Cardiac septum (tissue), 1 donor: ENCODE measurements at regions of chr4 and their contacts with region 1.

Region 1: DNA sequence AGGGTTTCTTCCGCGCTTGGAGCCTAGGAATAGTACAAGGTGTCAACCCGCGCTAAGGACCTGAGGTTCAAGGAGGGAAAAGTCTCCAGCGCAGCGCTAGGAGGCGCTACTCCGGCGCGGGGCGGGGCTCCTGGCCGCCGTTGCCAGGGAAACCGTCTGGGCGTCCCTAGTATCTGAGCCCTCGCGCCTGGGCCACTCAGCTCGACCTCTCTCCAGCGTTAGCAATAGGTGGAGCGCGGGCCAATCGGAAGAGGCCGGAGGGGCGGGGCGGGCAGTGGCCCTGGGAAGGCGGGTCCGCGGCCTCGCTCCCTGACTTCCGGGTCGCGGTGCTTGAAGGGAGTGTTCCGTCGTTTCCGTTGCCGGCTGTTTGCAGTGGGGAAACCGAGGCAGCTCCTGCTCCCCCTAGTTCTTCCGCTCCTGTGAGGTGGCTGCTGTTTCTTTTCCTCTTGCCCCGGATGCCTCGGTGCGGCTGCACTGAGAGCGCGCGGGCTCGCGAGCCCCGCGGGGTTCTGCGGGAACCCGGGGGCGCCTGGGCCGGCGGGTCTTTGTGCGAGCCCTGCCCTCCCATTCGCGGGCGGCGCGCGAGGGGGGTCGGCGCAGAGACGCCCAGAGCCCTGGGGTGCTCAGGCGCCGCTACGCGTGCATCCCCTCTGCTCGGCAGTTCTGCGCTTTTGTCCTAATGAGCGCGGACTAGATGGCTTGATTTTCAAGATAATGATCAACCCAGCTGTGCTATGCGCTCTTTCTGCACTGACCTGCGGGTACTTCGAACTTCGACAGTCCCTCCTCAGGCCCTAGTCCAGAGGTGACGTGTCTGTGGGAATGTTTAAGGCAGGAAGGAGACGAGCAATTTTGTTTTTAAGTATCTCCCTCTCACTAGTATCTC is at the start of gene ELMOD2:
- DNase-seq: peak; percentile 100
- total RNA-seq, gene ELMOD2: 18.3 TPM

Region 2: GRCh38 chr4:140427106-140427961 is 96.8 kb before region 1 on chr4 and contains the start of gene CLGN:
- intact Hi-C with region 1: loop called (anchors 1 kb)
- DNase-seq: peak; percentile 87
- total RNA-seq, gene CLGN: 44.7 TPM

Region 3: GRCh38 chr4:140603278-140603677 is 79.2 kb after region 1 on chr4:
- intact Hi-C with region 1: loop called (anchors 5 kb)
- DNase-seq: no peak

Region 4: GRCh38 chr4:140764774-140765392 is 240.8 kb after region 1 on chr4:
- intact Hi-C with region 1: no loop called
- DNase-seq: no peak